ENCODE measurements at regions of chr20 and their contacts with region 1.

Region 1: GRCh38 chr20:32484958-32485769 is 100.0 kb downstream of the NOL4L start:
- DNase-seq: peak; percentile 63 to 85
- ATAC-seq: peak; percentile 59 to 74
- H3K4me3 ChIP-seq: peak overlapping the region; percentile 77
- H3K27ac ChIP-seq: peak overlapping the region; percentile 98 to 99
- H3K4me1 ChIP-seq: peaks cover 24% of the 10 kb centered on the region
- CTCF ChIP-seq: peak; percentile 64
- EP300 ChIP-seq: no peak
- POLR2A ChIP-seq: no peak
- RAD21 ChIP-seq: peak; percentile 61 to 69

Region 2: GRCh38 chr20:32497589-32498224 is 12.5 kb after region 1 on chr20:
- CTCF ChIA-PET with region 1: interaction called, 14 read pairs
- POLR2A ChIA-PET with region 1: interaction called, 5 read pairs
- DNase-seq: no peak
- ATAC-seq: no peak
- H3K4me3 ChIP-seq: no peak overlapping the region
- H3K27ac ChIP-seq: no peak overlapping the region
- H3K4me1 ChIP-seq: no peaks in the 10 kb centered on the region
- CTCF ChIP-seq: no peak
- EP300 ChIP-seq: no peak
- POLR2A ChIP-seq: no peak
- RAD21 ChIP-seq: no peak

Measured in A549 (cell line).